Heart left ventricle (tissue), 16 donors: ENCODE measurements at regions of chr19 and their contacts with region 1.

Region 1: DNA sequence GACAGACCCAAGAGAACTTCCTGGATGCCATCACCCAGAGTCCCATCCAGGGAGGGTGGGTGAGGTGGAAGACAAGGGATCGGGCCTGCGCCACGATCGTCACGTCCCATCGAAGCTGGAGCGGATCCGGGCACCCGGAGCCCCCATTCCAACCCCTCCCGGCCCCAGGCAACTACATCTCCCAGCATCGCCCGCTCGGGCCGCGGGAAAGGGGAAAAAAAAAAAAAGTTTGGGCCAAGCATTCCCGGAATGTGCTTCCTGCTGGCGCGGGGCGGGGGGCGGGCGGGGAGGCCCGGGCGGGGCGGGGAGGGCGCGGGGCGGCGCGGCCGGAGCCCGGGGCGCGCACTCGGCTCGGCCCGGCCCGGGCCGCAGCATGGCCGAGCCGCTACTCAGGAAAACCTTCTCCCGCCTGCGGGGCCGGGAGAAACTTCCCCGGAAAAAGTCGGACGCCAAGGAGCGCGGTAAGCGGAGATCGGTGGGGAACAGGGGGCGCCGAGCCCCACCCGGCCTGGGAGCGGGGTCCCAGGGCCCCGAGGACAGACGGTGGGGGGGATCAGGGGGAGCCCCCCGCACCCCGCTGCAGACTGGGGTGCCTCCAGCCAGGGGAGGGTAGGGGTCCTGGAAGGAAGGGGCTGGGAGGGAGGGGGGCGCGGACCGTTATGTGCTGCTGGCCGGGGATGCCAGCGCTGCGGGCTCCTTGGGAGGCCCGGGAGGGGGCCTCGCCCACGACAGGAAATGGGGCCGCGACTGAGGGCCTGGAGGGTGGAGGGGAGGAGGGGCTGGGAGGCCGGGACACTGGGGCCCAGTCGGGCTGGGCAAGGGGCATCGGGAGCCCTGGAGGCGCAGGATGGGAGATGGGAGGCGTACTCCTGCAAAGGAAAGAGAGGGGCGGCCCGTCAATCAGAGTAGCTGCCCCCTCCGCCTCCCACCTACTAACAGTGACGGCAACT is at the start of gene SYDE1:
- DNase-seq: peak; percentile 60 to 73 (median 65)
- ATAC-seq: peak; percentile 35 to 77 (median 67)
- H3K4me3 ChIP-seq: peak within 1 kb of the TSS; percentile 65 to 98 (median 88)
- H3K27ac ChIP-seq: peak within 1 kb of the TSS; percentile 88 to 98 (median 95)
- H3K4me1 ChIP-seq: peaks cover 0 to 20% (median 7%) of the 10 kb centered on the region in 12 donors
- H3K27me3 ChIP-seq: peaks cover 0 to 11% (median 0%) of the 10 kb centered on the region in 9 donors
- CTCF ChIP-seq: no peak
- POLR2A ChIP-seq: peak; percentile 29 to 64
- total RNA-seq, gene SYDE1: 11.2 to 29.6 (median 15.8) TPM

Region 2: GRCh38 chr19:14616407-14616806 is 490.9 kb before region 1 on chr19:
- intact Hi-C with region 1: no loop called
- DNase-seq: no peak
- ATAC-seq: no peak
- H3K4me3 ChIP-seq: no peak overlapping the region
- H3K27ac ChIP-seq: no peak overlapping the region
- H3K4me1 ChIP-seq: peaks cover 0 to 9% (median 0%) of the 10 kb centered on the region in 12 donors
- H3K27me3 ChIP-seq: peaks cover 0 to 4% (median 0%) of the 10 kb centered on the region in 9 donors
- CTCF ChIP-seq: no peak
- POLR2A ChIP-seq: no peak

Region 3: GRCh38 chr19:15125232-15126067 is 18.1 kb after region 1 on chr19:
- intact Hi-C with region 1: loop called in 3 of 10 experiments (anchors 1 to 2 kb)
- DNase-seq: peak; percentile 98 to 99 (median 99)
- ATAC-seq: peak; percentile 91 to 93 (median 92)
- H3K4me3 ChIP-seq: peak overlapping the region; percentile 35 to 93 (median 72)
- H3K27ac ChIP-seq: peak overlapping the region; percentile 92 to 99 (median 96)
- H3K4me1 ChIP-seq: peaks cover 0 to 30% (median 16%) of the 10 kb centered on the region in 12 donors
- H3K27me3 ChIP-seq: no peaks in the 10 kb centered on the region
- CTCF ChIP-seq: peak in 3 of 12 donors; percentile 11 to 15 (median 15)
- POLR2A ChIP-seq: peak in 1 of 2 donors; percentile 50